Right ventricle myocardium inferior (tissue), 1 donor: ENCODE measurements at regions of chr4 and their contacts with region 1.

Region 1: GRCh38 chr4:8330821-8331574 is 61.4 kb downstream of the HTRA3 start:
- DNase-seq: peak; percentile 90
- ATAC-seq: peak; percentile 97

Region 2: GRCh38 chr4:7876201-7876875 is 454.7 kb before region 1 on chr4:
- intact Hi-C with region 1: no loop called
- DNase-seq: no peak
- ATAC-seq: peak; percentile 24

Region 3: DNA sequence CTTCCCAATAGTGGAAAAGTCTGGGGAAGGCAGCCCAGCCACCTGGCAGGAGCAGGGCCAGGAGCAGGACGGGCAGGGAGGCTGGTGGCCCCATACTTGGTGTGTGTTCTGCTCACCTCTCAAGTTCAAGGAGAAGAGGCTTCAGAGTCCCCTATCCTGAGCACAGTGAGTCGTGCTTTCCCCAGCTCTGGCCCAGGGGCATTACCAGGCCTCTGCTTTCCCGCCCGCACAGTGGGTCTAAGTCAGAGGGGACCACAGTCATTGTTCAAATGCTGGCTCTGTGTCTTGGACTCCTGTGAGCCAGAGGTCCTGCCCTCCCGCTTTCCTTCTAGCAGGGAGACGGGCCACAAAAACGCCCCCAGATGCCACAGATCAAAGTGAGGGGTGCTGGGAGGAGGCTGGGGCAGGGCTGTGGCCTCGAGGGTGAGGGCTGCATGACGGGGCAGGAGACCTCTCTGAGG is 33.8 kb before region 1 on chr4:
- intact Hi-C with region 1: no loop called
- DNase-seq: no peak
- ATAC-seq: no peak

Region 4: DNA sequence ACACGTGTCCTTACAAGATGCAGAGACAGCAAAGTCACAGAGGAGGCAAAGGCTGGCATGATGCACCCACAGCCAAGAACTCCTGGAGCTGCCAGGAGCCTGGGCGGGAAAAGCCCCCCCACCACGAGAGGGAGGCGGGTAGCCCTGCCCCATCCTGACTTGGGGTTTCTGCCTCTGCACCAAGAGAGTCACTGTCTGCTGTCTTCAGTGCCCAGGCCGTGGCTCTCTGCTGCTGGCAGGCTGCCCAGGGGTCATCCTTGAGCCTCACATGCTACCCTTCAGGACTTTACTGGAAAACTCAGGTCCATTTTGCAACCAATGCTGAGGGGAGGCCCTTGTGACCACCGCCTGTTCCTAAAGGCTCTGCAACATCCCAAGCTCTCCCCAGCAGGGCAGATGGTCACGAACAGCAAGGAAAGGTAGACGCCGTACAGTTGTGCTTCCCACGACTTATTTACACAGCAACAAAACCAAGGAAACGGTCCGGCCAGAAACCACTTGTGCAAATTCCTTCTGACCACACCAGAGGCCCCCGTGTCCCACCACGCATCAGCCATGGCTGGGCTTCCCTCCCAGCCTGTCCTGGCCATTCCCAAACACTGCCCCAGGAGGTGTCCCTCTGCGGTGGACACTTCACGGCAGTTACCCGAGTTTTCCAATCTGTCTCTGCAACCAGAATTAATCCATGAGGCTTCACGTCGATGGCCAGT is 52.6 kb after region 1 on chr4:
- intact Hi-C with region 1: loop called (anchors 5 kb)
- DNase-seq: no peak
- ATAC-seq: no peak